OCI-LY7 (cell line): ENCODE measurements at regions of chr3 and their contacts with region 1.

Region 1: DNA sequence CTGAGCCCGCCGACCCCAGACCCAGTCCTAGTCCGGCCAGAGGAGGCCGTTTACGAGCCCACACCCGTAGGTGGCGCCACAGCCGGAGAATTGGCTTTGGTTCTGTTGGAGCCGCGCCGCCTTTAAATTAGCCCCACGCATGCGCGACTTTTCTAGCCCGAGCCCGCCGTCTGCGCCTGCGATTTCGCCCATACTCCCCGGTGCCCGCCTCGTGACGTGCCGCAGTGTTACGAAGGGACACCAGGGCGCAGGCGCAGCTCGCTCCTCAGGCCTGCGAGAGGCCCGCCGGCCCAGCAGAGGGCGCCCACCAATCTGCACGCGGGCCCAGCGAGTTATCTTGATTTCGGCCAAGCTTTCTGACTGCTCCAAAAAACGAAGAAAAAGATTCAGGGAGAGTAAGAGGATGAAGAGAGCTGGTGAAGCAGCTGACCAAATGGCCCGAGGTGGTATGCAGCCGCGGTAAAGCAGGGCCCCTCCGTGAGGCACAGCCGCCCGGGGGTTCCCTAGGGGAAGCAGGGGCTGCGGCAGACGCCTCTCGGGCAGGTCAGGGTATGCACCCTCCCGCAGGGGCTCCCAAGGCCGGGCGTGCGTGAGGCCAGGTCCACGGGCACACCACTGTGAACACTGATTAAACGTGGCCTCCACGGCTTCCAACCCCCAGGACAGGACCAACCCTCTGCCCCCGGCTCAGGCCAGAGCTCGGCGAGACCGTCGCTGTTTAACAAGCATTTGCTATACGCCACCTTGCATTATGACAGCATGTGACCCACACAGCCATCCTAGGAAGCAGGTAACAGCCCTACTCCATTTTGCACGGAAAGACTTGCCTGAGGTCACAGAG is 32.8 kb downstream of the RPN1 start:
- DNase-seq: peak; percentile 97
- H3K4me3 ChIP-seq: peak overlapping the region; percentile 89
- H3K27ac ChIP-seq: peak overlapping the region; percentile 52
- H3K4me1 ChIP-seq: peaks cover 21% of the 10 kb centered on the region
- CTCF ChIP-seq: peak; percentile 92

Region 2: DNA sequence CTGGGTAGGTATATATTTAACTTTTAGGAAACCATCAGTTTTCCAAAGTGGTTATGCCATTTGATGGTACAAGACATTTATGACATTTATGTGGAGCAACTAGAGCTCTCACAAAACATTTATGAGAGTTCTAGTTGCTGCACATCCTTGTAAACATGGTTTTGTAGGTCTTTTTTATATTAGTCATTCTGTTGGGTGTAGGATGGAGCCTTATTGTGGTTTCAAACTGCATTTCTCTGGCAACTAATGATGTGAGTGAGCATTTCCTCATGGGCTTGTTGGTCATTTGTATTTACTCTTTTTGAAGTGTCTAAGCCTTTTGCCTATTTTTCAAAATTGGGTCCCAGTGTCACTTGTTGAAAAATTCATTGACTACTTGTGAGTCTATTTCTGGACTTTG is 749.8 kb before region 1 on chr3:
- CTCF ChIA-PET with region 1: no interaction called
- POLR2A ChIA-PET with region 1: no interaction called
- intact Hi-C with region 1: no loop called
- DNase-seq: no peak
- H3K4me3 ChIP-seq: no peak overlapping the region
- H3K27ac ChIP-seq: no peak overlapping the region
- H3K4me1 ChIP-seq: no peaks in the 10 kb centered on the region
- CTCF ChIP-seq: no peak

Region 3: GRCh38 chr3:128794770-128795649 is 177.2 kb after region 1 on chr3:
- CTCF ChIA-PET with region 1: no interaction called
- POLR2A ChIA-PET with region 1: no interaction called
- intact Hi-C with region 1: loop called (anchors 1 kb)
- DNase-seq: peak; percentile 77
- H3K4me3 ChIP-seq: no peak overlapping the region
- H3K27ac ChIP-seq: no peak overlapping the region
- H3K4me1 ChIP-seq: peaks cover 10% of the 10 kb centered on the region
- CTCF ChIP-seq: peak; percentile 88

Region 4: DNA sequence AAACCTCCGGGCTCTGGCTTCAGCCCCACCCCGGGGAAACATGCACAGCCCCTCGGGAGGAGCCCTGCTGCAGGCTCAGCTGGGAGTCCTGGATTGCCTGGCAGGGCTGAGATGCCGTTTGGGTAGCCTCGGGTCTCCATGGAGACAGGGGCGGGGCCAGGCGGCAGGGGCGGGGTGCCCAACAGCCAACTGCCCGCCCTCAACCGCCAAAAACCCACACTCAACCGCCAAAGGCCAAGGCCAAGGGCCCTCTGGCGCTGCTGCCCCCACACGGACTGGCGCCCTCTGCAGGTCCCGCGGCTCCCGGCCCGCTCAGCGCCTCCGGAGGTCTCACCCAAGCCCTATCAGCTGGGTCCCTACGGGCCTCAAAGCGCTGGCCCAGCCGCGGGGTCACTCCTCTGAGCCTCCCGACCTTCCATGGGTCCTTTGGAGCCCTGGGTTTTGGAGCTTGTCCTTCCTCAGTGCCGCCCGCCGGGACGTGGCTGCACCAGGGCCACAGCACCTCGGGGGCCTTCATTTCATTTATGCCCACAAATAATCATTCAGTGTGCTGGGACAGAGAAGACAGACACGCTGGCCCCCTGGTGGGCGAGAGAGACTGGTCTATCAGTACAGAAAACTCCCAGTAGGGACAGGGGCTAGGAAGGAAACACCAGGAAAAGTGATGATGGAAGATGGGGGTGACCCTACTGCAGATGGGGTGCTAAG is 228.2 kb after region 1 on chr3:
- CTCF ChIA-PET with region 1: no interaction called
- POLR2A ChIA-PET with region 1: interaction called, 5 read pairs
- intact Hi-C with region 1: loop called (anchors 5 kb)
- DNase-seq: peak; percentile 76
- H3K4me3 ChIP-seq: peak overlapping the region; percentile 56
- H3K27ac ChIP-seq: peak overlapping the region; percentile 31
- H3K4me1 ChIP-seq: peaks cover 14% of the 10 kb centered on the region
- CTCF ChIP-seq: peak; percentile 78

Region 5: DNA sequence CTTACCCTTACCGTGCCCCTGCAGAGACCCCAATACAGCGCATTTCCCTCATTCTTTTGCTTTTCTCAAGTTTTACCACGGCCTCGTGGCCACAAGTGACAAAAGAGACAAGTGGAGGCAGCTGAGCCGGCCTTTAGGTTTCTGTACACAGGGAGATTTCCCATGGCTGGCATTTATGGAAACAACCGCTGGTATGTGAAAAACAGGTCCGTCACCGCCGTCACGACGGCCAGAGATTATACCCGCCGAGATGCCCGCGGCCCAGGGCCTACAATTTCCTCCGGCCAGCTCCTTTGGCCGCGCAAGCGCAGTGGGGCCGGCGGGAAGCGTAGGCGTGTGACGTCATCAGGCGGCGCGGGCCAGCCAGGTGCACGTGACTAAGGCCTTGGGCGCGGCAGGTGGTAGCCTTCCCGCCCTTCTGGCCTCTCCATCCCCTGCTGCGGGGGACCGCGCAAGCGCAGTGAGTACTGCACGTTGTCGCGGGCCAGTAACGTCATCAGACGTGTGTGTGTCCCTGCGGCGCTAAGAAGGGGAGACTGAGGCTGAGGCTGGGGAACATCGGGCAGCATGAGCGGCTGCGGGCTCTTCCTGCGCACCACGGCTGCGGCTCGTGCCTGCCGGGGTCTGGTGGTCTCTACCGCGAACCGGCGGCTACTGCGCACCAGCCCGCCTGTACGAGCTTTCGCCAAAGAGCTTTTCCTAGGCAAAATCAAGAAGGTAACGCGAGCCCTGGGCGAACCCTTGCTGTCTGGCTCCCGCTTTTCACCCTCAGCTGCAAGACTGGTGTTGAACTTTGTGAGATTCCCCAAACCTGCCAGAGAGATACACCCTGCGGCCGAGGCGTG is 261.6 kb after region 1 on chr3 and contains the start of gene ACAD9:
- CTCF ChIA-PET with region 1: no interaction called
- POLR2A ChIA-PET with region 1: no interaction called
- intact Hi-C with region 1: loop called (anchors 5 kb)
- DNase-seq: peak; percentile 99
- H3K4me3 ChIP-seq: peak within 1 kb of the TSS; percentile 90
- H3K27ac ChIP-seq: peak within 1 kb of the TSS; percentile 58
- H3K4me1 ChIP-seq: peaks cover 25% of the 10 kb centered on the region
- CTCF ChIP-seq: no peak
- total RNA-seq, gene ACAD9: 88.5 and 93.7 TPM in 2 replicates

Region 6: GRCh38 chr3:129106331-129106730 is 488.6 kb after region 1 on chr3:
- CTCF ChIA-PET with region 1: no interaction called
- POLR2A ChIA-PET with region 1: no interaction called
- intact Hi-C with region 1: no loop called
- DNase-seq: no peak
- H3K4me3 ChIP-seq: no peak overlapping the region
- H3K27ac ChIP-seq: no peak overlapping the region
- H3K4me1 ChIP-seq: no peaks in the 10 kb centered on the region
- CTCF ChIP-seq: peak; percentile 31; the same call in 1 of the 2 replicates